ENCODE measurements at regions of chr13 and their contacts with region 1.

Region 1: DNA sequence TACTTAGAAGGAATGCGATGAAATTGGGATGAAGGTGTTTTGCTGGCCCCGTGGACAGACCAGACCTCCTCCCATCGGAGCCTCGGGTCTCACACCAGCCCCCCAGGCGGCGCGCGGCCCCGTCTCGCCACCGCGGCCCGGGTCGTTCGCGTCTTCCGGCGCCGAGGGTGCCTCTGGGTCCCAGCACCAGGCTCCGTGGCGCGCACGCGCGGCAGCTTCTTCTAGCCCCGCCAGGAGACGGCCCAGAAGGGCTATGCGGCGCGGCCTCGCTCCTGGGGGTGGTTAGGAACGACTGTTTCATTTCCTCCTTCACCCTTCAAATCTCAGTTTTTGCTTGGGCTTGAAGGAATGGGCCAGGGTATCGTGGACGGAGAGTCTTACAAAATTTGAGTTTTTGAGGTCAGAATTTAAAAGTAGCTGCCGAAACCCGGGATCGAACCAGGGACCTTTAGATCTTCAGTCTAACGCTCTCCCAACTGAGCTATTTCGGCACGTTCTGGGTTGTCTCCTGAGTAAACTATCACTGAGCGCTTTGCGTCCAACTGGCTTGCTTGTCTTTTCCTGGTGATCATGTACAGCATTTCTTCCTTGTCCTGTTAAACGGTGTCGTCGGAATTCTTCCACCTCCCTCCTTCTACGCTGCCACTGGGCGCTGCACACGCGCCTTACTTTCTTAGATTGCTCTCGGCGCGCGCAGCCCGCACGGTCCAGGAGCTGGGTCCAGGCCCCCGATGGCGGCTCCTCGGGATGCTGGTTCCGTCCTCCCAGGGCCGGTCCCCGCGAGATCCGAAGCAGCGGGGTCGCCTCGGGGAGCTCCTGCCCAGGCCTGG is 46.5 kb downstream of the TGDS start:
- DNase-seq: peak; percentile 84 to 95 (median 90)
- H3K4me3 ChIP-seq: peak overlapping the region; percentile 73
- H3K4me3 Mint-ChIP-seq: peak overlapping the region; percentile 89 to 96 (median 90)
- H3K27ac ChIP-seq: peak overlapping the region; percentile 73
- H3K27ac Mint-ChIP-seq: peak overlapping the region; percentile 91 to 99 (median 97)
- H3K4me1 ChIP-seq: peaks cover 10% of the 10 kb centered on the region
- H3K4me1 Mint-ChIP-seq: peaks cover 16 to 25% (median 23%) of the 10 kb centered on the region in 3 donors
- H3K27me3 ChIP-seq: no peaks in the 10 kb centered on the region
- H3K27me3 Mint-ChIP-seq: peaks cover 5 to 6% of the 10 kb centered on the region in 2 donors

Region 2: GRCh38 chr13:94567581-94567980 is 18.1 kb after region 1 on chr13:
- CTCF ChIA-PET with region 1: interaction called, 15 read pairs
- POLR2A ChIA-PET with region 1: interaction called, 3 read pairs
- DNase-seq: no peak
- H3K4me3 ChIP-seq: no peak overlapping the region
- H3K4me3 Mint-ChIP-seq: no peak overlapping the region
- H3K27ac ChIP-seq: no peak overlapping the region
- H3K27ac Mint-ChIP-seq: peak overlapping the region in 2 of 8 donors; percentile 3 to 14
- H3K4me1 ChIP-seq: no peaks in the 10 kb centered on the region
- H3K4me1 Mint-ChIP-seq: no peaks in the 10 kb centered on the region
- H3K27me3 ChIP-seq: no peaks in the 10 kb centered on the region
- H3K27me3 Mint-ChIP-seq: no peaks in the 10 kb centered on the region

Region 3: DNA sequence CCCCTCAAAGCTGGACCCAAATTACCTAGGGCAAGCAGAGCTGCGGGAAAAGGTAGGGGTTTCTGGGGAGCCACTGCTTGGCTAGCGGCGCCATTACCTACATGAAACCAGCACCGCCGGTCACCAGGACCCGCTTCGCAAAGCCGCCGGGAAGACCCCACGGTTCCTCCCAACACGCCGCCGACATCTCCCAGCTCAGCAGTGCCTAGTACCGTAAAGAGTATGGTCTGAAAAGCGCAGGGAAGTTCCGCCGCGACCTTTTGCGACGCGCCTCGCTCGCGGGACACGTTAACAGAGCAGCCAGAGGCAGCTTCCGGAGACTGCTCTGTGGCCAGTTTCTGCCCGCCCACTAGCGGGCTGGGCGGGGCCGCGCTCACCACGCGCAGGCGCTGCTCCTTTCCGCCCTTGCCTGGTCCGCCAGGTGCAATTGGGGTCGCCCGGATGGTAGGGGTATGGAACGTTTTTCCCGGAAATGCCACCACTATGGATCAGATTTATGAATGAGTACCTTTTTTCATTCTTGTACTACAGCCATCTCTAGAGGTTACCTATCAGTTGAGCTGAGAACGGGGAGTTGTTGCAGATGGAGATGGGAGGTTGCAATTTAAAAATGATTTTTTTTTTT is 46.6 kb after region 1 on chr13 and contains the start of gene TGDS:
- CTCF ChIA-PET with region 1: interaction called, 17 read pairs
- POLR2A ChIA-PET with region 1: interaction called, 31 read pairs
- DNase-seq: peak; percentile 82 to 92 (median 87)
- H3K4me3 ChIP-seq: peak within 1 kb of the TSS; percentile 98
- H3K4me3 Mint-ChIP-seq: peak within 1 kb of the TSS; percentile 85 to 96 (median 93)
- H3K27ac ChIP-seq: peak within 1 kb of the TSS; percentile 87
- H3K27ac Mint-ChIP-seq: peak within 1 kb of the TSS; percentile 75 to 98 (median 91)
- H3K4me1 ChIP-seq: peaks cover 31% of the 10 kb centered on the region
- H3K4me1 Mint-ChIP-seq: peaks cover 34 to 47% (median 42%) of the 10 kb centered on the region in 3 donors
- H3K27me3 ChIP-seq: no peaks in the 10 kb centered on the region
- H3K27me3 Mint-ChIP-seq: no peaks in the 10 kb centered on the region
- total RNA-seq, gene TGDS: 19.9 to 20.3 TPM

Region 4: DNA sequence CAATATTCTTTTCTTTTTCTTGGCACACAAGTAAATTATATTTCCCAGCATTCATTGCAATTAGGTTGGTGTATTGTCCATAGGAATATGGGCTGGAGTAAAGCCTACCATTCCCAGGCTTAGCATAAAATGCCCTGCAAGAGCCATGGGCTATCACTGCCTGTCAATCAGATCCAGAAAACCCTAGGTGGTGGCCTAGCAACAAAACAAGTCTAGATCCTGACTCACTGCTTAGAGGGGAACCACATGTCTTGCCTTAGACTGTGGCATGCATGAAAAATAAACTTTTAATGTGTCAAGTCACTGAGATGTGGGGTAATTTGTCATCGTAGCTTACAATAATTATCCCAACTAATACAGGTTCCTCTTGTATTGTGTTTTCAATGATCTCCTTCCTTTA is 146.7 kb after region 1 on chr13:
- CTCF ChIA-PET with region 1: no interaction called
- POLR2A ChIA-PET with region 1: no interaction called
- DNase-seq: no peak
- H3K4me3 ChIP-seq: no peak overlapping the region
- H3K4me3 Mint-ChIP-seq: no peak overlapping the region
- H3K27ac ChIP-seq: no peak overlapping the region
- H3K27ac Mint-ChIP-seq: no peak overlapping the region
- H3K4me1 ChIP-seq: no peaks in the 10 kb centered on the region
- H3K4me1 Mint-ChIP-seq: no peaks in the 10 kb centered on the region
- H3K27me3 ChIP-seq: peaks cover 15% of the 10 kb centered on the region
- H3K27me3 Mint-ChIP-seq: peaks cover 34 to 64% of the 10 kb centered on the region in 2 donors

Region 5: GRCh38 chr13:94917824-94918223 is 368.4 kb after region 1 on chr13:
- CTCF ChIA-PET with region 1: no interaction called
- POLR2A ChIA-PET with region 1: no interaction called
- DNase-seq: no peak
- H3K4me3 ChIP-seq: no peak overlapping the region
- H3K4me3 Mint-ChIP-seq: no peak overlapping the region
- H3K27ac ChIP-seq: no peak overlapping the region
- H3K27ac Mint-ChIP-seq: no peak overlapping the region
- H3K4me1 ChIP-seq: no peaks in the 10 kb centered on the region
- H3K4me1 Mint-ChIP-seq: no peaks in the 10 kb centered on the region
- H3K27me3 ChIP-seq: no peaks in the 10 kb centered on the region
- H3K27me3 Mint-ChIP-seq: no peaks in the 10 kb centered on the region